ENCODE measurements at regions of chr11 and their contacts with region 1.

Region 1: DNA sequence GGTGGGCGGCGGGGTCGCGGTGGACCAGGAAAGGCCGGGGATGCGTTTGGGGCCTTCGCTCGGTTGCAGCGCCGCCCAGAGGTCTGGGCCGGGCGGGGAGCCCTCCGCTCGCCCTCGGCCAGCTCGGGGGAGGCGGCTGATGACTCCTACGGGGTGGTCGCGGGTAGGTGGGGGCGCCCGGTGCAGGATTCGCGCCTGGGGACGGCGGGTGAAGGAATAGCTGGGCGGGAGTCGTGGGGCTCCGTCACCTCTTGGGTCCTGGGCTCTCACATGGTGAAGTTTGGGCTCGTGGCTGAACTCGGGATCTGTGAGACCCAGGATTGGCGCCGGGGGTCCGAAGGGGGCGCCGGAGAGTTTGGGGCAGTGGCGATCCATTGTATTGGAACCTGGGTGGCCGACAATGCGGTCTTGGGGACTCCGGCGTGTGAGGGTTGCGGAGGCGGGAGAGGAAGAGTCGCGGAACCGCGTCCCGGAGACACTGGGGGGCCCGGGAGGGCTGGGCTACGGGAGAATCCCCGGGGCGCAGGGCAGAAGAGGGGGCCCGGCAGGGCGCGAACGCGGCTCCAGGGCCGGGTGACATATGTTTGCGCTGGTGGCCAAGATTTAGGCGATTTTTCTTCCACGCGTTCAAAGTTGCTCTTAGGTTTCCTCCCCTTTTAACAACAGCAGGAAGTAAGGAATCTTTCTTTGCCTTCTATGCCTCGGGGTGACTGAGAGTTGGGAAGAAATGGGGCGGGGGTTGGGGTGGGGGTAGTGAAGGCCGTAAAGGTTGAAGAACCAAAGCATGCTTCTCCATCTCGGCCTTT is 935 bp downstream of the QSER1 start:
- DNase-seq: peak; percentile 77
- ATAC-seq: peak; percentile 45
- H3K4me3 Mint-ChIP-seq: peak overlapping the region; percentile 97
- H3K27ac Mint-ChIP-seq: peak overlapping the region; percentile 98
- H3K4me1 Mint-ChIP-seq: peaks cover 38% of the 10 kb centered on the region
- H3K27me3 Mint-ChIP-seq: no peaks in the 10 kb centered on the region

Region 2: GRCh38 chr11:32583459-32584271 is 309.9 kb before region 1 on chr11 and contains the start of gene EIF3M:
- CTCF ChIA-PET with region 1: interaction called, 3 read pairs
- POLR2A ChIA-PET with region 1: no interaction called
- intact Hi-C with region 1: loop called in 1 of 2 experiments (anchors 2 kb)
- DNase-seq: peak; percentile 98
- ATAC-seq: peak; percentile 99
- H3K4me3 Mint-ChIP-seq: peak within 1 kb of the TSS; percentile 87
- H3K27ac Mint-ChIP-seq: peak within 1 kb of the TSS; percentile 96
- H3K4me1 Mint-ChIP-seq: peaks cover 39% of the 10 kb centered on the region
- H3K27me3 Mint-ChIP-seq: no peaks in the 10 kb centered on the region
- total RNA-seq, gene EIF3M: 392 to 408 TPM

Region 3: DNA sequence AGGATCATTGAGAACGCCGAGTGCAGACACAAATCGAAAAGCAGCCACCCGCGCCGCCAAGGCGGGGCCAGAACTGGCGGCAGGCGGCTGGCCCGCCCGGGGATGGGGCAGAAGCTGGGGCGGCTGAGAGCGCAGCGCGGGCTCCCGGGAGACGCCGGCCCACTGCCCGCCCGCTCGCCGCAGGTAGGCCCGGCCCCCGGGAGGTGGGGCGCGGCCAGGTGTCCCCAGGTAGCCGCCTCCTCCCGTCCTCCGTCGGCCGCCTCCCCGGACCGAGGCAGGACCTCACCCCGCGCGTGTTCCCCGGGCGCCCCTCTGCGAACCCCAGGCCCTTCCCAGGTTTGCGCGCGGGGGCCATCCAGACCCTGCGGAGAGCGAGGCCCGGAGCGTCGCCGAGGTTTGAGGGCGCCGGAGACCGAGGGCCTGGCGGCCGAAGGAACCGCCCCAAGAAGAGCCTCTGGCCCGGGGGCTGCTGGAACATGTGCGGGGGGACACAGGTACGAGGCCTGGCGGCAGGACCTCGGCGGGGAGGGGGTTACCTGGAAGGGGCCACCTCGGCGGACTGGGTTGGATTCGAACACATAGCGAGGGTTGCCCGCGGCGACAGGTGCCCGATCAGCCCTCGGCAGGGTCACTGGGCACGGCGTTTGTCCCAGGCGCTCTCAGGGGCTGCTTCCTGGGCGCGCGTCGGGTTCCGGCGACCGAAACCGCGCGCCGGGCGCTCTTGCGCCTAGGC is 63.7 kb before region 1 on chr11 and contains the start of gene PRRG4:
- CTCF ChIA-PET with region 1: no interaction called
- POLR2A ChIA-PET with region 1: no interaction called
- intact Hi-C with region 1: loop called in 1 of 2 experiments (anchors 2 kb)
- DNase-seq: peak; percentile 75
- ATAC-seq: peak; percentile 89
- H3K4me3 Mint-ChIP-seq: peak within 1 kb of the TSS; percentile 76
- H3K27ac Mint-ChIP-seq: peak within 1 kb of the TSS; percentile 67
- H3K4me1 Mint-ChIP-seq: peaks cover 4% of the 10 kb centered on the region
- H3K27me3 Mint-ChIP-seq: peaks cover 36% of the 10 kb centered on the region
- total RNA-seq, gene PRRG4: 0.18 to 0.23 TPM

Region 4: GRCh38 chr11:33015621-33016551 is 122.3 kb after region 1 on chr11 and contains the start of gene DEPDC7:
- CTCF ChIA-PET with region 1: no interaction called
- POLR2A ChIA-PET with region 1: no interaction called
- intact Hi-C with region 1: loop called in 1 of 2 experiments (anchors 2 kb)
- DNase-seq: peak; percentile 90
- ATAC-seq: peak; percentile 81
- H3K4me3 Mint-ChIP-seq: peak within 1 kb of the TSS; percentile 75
- H3K27ac Mint-ChIP-seq: peak within 1 kb of the TSS; percentile 37
- H3K4me1 Mint-ChIP-seq: peaks cover 43% of the 10 kb centered on the region
- H3K27me3 Mint-ChIP-seq: peaks cover 29% of the 10 kb centered on the region
- total RNA-seq, gene DEPDC7: 2.0 to 2.3 TPM

Region 5: GRCh38 chr11:33065445-33066178 is 172.1 kb after region 1 on chr11:
- CTCF ChIA-PET with region 1: interaction called, 6 read pairs
- POLR2A ChIA-PET with region 1: no interaction called
- intact Hi-C with region 1: loop called (anchors 1 to 5 kb)
- DNase-seq: peak; percentile 87
- ATAC-seq: peak; percentile 76
- H3K4me3 Mint-ChIP-seq: no peak overlapping the region
- H3K27ac Mint-ChIP-seq: no peak overlapping the region
- H3K4me1 Mint-ChIP-seq: peaks cover 45% of the 10 kb centered on the region
- H3K27me3 Mint-ChIP-seq: no peaks in the 10 kb centered on the region

Region 6: DNA sequence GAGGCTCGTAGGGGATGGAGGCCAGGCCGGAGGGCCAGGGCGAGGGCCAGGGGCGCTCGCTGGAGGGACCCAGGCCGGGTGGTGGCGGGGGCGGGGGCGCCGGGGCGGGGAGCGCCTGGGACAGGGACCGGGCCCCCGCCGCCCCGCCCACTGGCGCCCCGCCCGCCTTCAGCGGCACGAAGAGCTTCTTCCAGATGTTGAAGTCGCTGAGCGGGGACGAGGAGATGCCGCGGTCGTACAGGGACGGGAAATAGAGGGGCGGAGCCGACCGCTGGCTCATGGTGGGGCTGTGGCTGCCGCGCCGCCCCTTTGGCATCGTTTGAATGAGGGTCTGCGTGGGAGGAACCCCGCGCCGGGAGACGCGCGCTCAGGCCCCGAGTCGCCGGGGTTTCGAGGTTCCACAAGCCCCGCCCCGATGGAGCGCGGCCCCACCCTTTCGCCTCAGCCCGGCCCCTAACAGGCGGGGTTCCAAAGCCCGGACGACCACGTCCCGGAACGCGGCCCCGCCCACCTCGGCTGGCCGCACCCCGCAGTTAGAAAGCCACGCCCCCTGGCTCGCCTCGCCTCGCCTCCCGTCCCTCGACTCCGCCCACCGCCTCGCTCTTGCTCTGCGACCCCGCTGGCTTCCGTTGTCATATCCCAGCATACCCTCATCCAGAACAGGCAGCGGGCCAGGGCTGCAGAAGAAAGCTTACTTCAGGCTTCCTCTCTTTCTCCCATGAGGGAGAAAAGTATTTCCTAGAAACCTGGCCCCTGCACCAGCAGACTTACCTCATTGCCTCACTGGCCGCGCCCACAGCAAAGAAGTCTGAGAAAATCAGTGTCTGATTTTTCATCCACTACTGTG is 807.1 kb after region 1 on chr11 and contains the start of gene C11orf91:
- CTCF ChIA-PET with region 1: no interaction called
- POLR2A ChIA-PET with region 1: no interaction called
- intact Hi-C with region 1: loop called in 1 of 2 experiments (anchors 2 kb)
- DNase-seq: peak; percentile 94
- ATAC-seq: peak; percentile 93
- H3K4me3 Mint-ChIP-seq: peak within 1 kb of the TSS; percentile 74
- H3K27ac Mint-ChIP-seq: peak within 1 kb of the TSS; percentile 45
- H3K4me1 Mint-ChIP-seq: peaks cover 18% of the 10 kb centered on the region
- H3K27me3 Mint-ChIP-seq: peaks cover 16% of the 10 kb centered on the region
- total RNA-seq, gene C11orf91: not detected

Measured in activated CD4-positive, alpha-beta T cell treated with anti-CD3 and anti-CD28 coated beads for 36 hours (primary cell).